Aorta (tissue), 5 donors: ENCODE measurements at regions of chr4 and their contacts with region 1.

Region 1: DNA sequence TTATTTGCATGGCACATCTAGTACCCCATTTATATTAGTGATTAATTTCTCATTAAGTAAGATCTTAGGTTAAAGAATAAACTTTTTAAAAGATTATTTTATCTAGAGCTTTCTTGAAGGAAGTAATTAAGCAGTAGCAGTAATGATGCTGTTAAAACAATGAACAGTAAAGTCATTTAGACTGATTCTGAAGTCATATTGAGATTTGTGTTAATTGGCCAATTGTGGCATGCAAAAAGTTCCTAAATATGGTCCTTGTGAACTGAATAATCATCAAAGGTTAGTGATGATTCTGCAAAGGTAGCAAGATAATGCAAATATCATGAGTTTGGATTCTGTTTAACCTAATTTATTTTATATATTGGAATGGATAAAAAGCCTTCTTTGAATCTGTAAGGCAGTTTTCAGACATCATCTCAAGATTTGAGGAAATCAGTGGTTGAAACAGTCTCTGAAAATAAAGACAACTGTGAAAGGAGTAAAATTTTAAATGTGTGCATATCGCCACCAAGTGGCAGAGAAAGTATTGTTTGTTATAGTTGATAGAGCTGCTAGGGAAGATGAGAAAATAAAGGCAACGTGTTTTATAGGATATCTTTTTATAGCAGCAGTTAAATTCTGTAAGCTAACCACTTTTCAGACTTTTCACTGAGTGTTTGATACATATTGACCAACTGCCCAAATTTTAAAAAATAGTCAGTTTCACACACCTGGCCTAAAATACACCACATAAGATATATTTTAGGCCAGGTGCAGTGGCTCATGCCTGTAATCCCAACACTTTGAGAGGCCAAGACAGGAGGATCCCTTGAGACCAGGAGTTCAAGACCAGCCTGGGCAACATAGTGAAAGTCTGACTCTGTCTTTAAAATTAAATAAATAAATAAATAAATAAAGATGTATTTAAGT is 79.6 kb downstream of the CCKAR start:
- DNase-seq: no peak
- ATAC-seq: peak; percentile 70
- H3K4me3 ChIP-seq: no peak overlapping the region
- H3K27ac ChIP-seq: no peak overlapping the region
- H3K4me1 ChIP-seq: no peaks in the 10 kb centered on the region
- H3K27me3 ChIP-seq: no peaks in the 10 kb centered on the region

Region 2: DNA sequence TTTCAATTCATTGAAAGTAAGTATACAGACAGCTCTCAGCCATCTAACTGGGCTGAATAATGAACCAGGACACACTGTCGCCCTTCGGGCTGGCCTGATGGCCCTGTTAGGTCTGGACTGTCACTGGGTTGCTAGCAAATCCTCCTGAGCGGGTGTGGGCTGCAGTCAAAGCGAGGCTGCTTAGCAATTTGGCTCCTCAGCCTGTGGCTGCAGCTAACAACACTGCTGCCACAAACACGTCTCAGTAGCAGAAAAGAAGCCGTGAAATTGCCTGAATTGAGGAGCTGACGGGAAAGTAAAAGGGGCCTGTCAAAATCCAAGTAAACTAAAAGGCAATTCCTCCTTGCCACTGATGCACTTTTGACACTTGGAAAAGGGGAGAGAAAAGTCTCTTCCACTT is 423.8 kb before region 1 on chr4:
- intact Hi-C with region 1: loop called (anchors 5 kb)
- DNase-seq: no peak
- ATAC-seq: no peak
- H3K4me3 ChIP-seq: no peak overlapping the region
- H3K27ac ChIP-seq: no peak overlapping the region
- H3K4me1 ChIP-seq: no peaks in the 10 kb centered on the region
- H3K27me3 ChIP-seq: no peaks in the 10 kb centered on the region

Region 3: GRCh38 chr4:26028793-26029567 is 381.7 kb before region 1 on chr4:
- intact Hi-C with region 1: loop called in 1 of 2 experiments (anchors 2 kb)
- DNase-seq: peak; percentile 83 to 93
- ATAC-seq: peak; percentile 84
- H3K4me3 ChIP-seq: no peak overlapping the region
- H3K27ac ChIP-seq: no peak overlapping the region
- H3K4me1 ChIP-seq: peaks cover 2 to 6% of the 10 kb centered on the region in 2 donors
- H3K27me3 ChIP-seq: no peaks in the 10 kb centered on the region

Region 4: DNA sequence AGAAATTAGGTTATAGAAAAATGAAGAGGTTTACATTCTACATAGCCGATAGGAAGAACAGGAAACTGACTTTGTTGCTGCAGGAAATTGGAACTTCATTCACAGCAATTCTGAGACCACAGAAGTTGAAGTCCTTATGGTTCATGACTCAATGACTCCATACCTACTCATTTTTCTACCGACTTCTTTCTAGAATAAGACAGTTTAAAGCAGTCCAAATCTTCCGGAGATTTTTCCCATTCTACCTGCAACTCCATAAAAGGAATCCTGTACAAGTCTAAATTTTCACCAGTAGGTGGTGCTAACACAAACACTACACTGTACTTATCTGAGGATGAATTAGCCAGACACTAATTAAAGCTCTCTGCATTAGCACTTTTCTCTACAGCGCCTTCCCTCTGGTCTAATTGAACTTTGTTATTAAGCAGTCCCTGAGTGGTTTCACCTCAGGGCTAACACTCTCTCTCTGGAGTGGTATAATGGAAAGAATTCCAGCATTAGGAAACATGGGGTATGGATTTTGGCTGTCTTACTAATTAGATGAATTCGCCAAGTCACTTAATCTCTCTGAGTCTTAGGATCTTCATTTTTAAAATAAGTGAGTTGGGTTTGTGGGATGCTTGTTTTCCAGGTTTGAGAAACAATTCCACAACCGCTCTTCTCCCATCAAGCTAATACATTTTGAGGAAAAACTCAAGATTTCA is 328.7 kb before region 1 on chr4:
- intact Hi-C with region 1: loop called (anchors 5 to 10 kb)
- DNase-seq: no peak
- ATAC-seq: no peak
- H3K4me3 ChIP-seq: no peak overlapping the region
- H3K27ac ChIP-seq: no peak overlapping the region
- H3K4me1 ChIP-seq: no peaks in the 10 kb centered on the region
- H3K27me3 ChIP-seq: no peaks in the 10 kb centered on the region

Region 5: DNA sequence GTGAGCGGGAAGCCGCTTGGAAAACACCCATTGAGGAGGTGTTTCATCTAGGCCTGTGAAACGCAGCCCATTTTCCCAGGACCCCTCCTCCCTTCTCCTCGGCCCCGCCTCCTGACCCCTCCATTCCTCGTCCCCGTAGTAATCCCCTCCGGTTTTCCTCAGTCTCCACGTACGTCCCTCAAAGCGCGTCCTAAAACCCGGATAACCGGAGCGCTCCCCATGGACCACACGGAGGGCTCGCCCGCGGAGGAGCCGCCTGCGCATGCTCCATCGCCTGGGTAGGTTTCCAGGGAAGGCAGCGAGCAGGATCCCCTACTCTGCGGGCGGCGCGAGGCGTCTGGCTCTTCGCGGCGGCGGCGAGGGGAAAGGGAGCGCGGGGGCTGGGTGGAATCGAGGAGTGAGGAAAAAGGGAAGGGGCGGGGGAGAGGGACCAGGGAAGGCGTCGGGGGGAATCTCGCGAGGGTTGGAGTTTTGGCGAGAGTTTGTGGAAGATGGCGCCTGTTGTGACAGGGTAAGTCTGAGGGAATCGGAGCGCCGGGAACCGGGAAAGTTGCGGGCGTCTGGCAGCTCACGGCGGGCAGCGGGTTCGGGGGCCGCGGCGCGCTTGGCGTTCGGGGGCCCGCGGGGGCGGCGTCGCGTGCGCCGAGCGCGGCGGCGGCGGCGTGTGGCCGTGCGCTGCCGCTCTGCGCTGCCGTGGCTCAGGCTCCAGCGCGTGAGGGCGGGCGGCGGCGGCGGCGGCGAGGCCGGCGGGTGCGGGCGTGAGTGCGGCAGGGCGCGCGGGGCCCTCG is 89.9 kb before region 1 on chr4 and contains the start of gene RBPJ:
- intact Hi-C with region 1: loop called in 1 of 2 experiments (anchors 5 kb)
- DNase-seq: peak; percentile 95 to 98
- ATAC-seq: peak; percentile 92
- H3K4me3 ChIP-seq: peak within 1 kb of the TSS; percentile 67 to 84
- H3K27ac ChIP-seq: peak within 1 kb of the TSS; percentile 51 to 88
- H3K4me1 ChIP-seq: peaks cover 0 to 2% of the 10 kb centered on the region in 2 donors
- H3K27me3 ChIP-seq: no peaks in the 10 kb centered on the region
- total RNA-seq, gene RBPJ: 83.7 to 162 TPM

Region 6: GRCh38 chr4:26330186-26330787 is 80.4 kb before region 1 on chr4:
- intact Hi-C with region 1: loop called (anchors 5 kb)
- DNase-seq: no peak
- ATAC-seq: peak; percentile 82
- H3K4me3 ChIP-seq: no peak overlapping the region
- H3K27ac ChIP-seq: no peak overlapping the region
- H3K4me1 ChIP-seq: no peaks in the 10 kb centered on the region
- H3K27me3 ChIP-seq: no peaks in the 10 kb centered on the region

Region 7: GRCh38 chr4:26372525-26373172 is 38.0 kb before region 1 on chr4:
- intact Hi-C with region 1: no loop called
- DNase-seq: no peak
- ATAC-seq: peak; percentile 11
- H3K4me3 ChIP-seq: no peak overlapping the region
- H3K27ac ChIP-seq: no peak overlapping the region
- H3K4me1 ChIP-seq: peaks cover 0 to 5% of the 10 kb centered on the region in 2 donors
- H3K27me3 ChIP-seq: no peaks in the 10 kb centered on the region

Region 8: GRCh38 chr4:27016551-27016950 is 605.9 kb after region 1 on chr4:
- intact Hi-C with region 1: no loop called
- DNase-seq: no peak
- ATAC-seq: no peak
- H3K4me3 ChIP-seq: no peak overlapping the region
- H3K27ac ChIP-seq: no peak overlapping the region
- H3K4me1 ChIP-seq: no peaks in the 10 kb centered on the region
- H3K27me3 ChIP-seq: no peaks in the 10 kb centered on the region